ENCODE measurements at regions of chr1 and their contacts with region 1.

Region 1: DNA sequence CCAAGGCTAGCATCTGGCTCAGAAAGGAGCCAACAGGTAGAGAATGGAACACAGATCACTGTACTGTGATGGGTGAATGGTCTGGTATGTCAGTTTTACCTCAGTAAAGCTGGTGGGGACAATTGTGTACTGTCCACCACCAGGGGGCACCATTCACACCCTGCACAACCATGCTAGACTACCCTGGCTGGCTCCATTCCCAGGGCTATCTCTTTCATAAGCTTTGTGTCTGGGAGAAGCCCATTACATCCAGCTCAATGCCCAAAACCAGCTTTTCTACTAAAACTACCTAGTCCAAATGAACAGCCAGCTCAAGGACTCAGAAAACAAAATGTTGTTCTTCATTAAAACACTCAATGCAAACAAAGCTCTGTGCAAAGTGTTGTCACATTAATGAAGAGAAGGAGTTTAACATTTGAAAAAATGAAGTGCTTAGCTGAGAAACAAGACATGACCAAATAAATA is 62.0 kb upstream of the RASAL2 start:
- DNase-seq: peak; percentile 93 to 96
- H3K4me3 ChIP-seq: no peak overlapping the region
- CTCF ChIP-seq: peak in 1 of 3 donors; percentile 35
- POLR2A ChIP-seq: no peak

Region 2: GRCh38 chr1:177723533-177723932 is 308.4 kb before region 1 on chr1:
- intact Hi-C with region 1: no loop called
- DNase-seq: no peak
- H3K4me3 ChIP-seq: no peak overlapping the region
- CTCF ChIP-seq: no peak
- POLR2A ChIP-seq: no peak

Region 3: DNA sequence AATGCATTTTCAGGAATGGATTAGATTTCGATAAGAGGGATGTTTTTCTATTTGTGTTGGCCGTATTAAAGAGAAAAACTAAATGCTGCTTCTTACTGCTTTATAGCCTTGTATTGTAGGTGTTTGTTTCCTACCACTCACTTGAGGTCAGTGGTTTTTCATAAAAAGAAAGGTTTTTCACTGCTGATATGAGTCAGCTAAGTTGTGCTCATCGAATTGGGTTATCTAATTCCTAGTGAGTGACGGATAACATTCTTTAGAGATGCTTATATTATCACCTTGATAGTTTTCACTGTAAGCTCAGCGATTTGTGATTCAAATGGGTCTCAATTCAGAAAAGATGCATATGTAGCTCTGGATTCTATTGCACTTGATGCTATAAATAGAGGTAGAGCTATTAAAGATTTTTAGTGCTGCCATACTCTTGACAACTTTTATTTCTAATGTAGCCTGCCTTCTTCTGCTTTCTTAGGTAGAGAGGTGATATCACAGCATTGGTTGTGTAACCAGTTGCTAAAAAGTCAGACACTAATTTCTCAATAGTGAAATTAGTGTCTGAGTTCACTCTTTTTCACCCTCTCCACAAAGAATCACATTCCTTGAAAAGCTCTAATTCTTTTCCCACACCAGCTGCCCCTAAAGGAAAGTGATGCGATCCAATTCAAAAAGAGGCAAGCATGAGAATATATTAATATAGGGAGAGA is 242.0 kb after region 1 on chr1:
- intact Hi-C with region 1: loop called (anchors 10 kb)
- DNase-seq: no peak
- H3K4me3 ChIP-seq: no peak overlapping the region
- CTCF ChIP-seq: no peak
- POLR2A ChIP-seq: no peak

Region 4: GRCh38 chr1:179781962-179782361 is 1750.1 kb after region 1 on chr1:
- intact Hi-C with region 1: no loop called
- DNase-seq: no peak
- H3K4me3 ChIP-seq: no peak overlapping the region
- CTCF ChIP-seq: no peak
- POLR2A ChIP-seq: no peak